OCI-LY7 (cell line): ENCODE measurements at regions of chr3 and their contacts with region 1.

Region 1: DNA sequence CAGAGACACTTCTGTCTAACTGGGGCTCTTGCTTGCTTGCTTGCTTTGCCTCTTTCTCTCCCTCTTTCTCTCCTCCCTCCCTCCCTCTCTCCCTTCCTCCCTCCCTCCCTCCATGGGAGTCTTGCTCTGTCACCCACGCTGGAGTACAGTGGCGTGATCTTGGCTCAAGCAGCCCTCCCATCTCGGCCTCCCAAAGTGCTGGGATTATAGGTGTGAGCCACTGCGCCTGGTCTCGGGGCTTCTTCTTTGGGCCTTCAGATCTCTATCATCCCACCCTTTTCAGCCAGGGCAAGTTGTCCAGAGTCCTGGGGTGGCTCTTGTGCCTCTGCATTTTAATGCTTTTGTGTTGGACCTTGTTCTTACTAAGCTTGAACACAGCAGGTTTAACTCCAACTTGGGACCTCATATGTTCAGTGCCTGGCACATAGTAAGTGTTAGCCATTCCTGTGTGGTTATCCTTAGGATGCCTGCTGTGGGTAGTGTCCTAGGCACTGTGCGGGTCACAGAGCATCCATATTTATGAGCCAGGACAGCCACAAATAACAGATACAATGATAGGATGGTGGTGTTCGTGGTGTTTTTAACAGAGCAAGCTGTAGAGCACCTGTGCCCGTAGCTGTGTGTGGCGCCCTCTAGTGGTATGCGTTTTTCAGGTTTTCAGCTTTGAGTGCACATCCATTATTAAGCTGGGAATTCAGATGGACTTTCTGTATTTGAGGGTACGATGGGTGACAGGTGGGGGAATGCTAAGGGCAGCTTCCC is 75.1 kb downstream of the CCK start:
- DNase-seq: peak; percentile 84
- H3K4me3 ChIP-seq: no peak overlapping the region
- H3K27ac ChIP-seq: peak overlapping the region; percentile 92
- H3K4me1 ChIP-seq: peaks cover 63% of the 10 kb centered on the region
- CTCF ChIP-seq: peak; percentile 99

Region 2: GRCh38 chr3:42118762-42119361 is 72.0 kb before region 1 on chr3:
- CTCF ChIA-PET with region 1: interaction called, 36 read pairs
- POLR2A ChIA-PET with region 1: interaction called, 24 read pairs
- intact Hi-C with region 1: loop called (anchors 1 kb)
- DNase-seq: peak; percentile 83
- H3K4me3 ChIP-seq: no peak overlapping the region
- H3K27ac ChIP-seq: peak overlapping the region; percentile 22
- H3K4me1 ChIP-seq: peaks cover 58% of the 10 kb centered on the region
- CTCF ChIP-seq: peak; percentile 89

Region 3: DNA sequence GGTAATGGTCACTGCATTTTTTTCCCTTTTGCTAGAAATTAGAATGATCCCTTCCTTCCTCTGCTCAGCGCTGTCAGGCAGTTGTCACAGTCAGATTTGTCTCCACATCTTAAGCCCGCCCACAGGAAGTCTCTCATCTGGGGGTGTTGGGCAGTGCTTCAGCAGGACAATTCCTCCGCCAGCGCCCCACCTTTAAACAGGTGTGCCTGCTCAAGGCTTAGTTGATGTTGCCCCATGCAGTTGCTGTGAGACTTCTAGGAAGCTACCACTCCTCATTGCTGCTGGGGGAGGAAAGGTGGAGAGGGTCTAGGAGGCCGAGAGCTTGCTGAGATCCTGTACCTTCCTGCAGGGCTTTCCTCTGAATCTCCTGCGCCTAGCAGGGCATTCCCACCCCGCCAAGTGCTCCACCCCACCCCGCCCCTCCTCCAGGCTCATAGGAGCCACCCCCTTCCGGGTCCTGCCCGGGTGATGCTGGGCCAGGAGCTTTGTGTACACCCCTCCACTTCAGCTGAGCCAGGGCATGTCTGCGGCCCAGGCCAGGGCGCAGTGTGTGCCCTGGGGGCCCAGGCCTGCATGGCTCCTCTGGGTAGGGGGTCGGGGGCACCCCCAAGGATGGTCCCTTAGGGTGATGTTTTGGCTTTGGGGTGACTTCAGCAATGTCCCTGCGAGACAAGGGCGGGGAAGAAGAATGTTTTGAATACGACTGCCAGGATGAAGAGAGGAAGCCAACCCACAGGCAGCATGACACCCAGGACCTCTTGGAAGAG is 31.0 kb before region 1 on chr3:
- CTCF ChIA-PET with region 1: interaction called, 14 read pairs
- POLR2A ChIA-PET with region 1: interaction called, 6 read pairs
- intact Hi-C with region 1: no loop called
- DNase-seq: peak; percentile 88
- H3K4me3 ChIP-seq: peak overlapping the region; percentile 67
- H3K27ac ChIP-seq: peak overlapping the region; percentile 66
- H3K4me1 ChIP-seq: peaks cover 70% of the 10 kb centered on the region
- CTCF ChIP-seq: no peak

Region 4: DNA sequence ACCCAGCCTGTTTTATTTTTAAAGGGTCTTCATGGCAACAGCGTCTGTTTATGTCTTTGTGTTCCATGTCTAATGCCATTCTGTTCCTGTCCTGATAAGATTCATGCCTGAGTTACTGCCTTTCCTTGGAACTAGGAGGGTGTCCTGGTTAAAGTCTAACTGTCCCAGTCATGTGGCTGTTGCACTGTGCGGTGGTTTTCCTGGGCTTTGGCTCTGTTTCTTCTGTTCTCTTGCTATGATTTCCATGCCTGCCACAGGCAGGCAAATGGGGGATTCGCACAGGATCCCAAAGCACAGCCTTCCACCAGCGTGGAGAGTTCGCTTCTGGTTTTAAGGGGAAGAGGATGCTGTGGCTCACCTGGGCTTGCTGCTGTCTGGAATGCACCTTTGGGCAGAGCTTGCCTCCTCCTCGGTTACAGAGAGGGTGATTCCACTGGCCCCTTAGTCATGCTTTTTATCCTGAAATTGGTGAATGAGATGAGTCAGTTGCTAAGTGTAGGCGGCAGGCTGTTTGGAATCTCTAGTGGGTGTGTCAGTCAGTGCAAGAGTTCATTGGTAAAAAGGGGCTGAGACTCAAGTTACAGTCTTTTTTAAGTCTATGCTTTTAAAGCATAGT is 11.7 kb before region 1 on chr3:
- CTCF ChIA-PET with region 1: interaction called, 9 read pairs
- POLR2A ChIA-PET with region 1: interaction called, 14 read pairs
- intact Hi-C with region 1: loop called (anchors 1 kb)
- DNase-seq: no peak
- H3K4me3 ChIP-seq: no peak overlapping the region
- H3K27ac ChIP-seq: peak overlapping the region; percentile 10
- H3K4me1 ChIP-seq: peaks cover 68% of the 10 kb centered on the region
- CTCF ChIP-seq: no peak

Region 5: GRCh38 chr3:42229942-42230688 is 39.2 kb after region 1 on chr3:
- CTCF ChIA-PET with region 1: no interaction called
- POLR2A ChIA-PET with region 1: no interaction called
- intact Hi-C with region 1: loop called (anchors 1 kb)
- DNase-seq: peak; percentile 40
- H3K4me3 ChIP-seq: no peak overlapping the region
- H3K27ac ChIP-seq: no peak overlapping the region
- H3K4me1 ChIP-seq: peaks cover 3% of the 10 kb centered on the region
- CTCF ChIP-seq: peak; percentile 71

Region 6: DNA sequence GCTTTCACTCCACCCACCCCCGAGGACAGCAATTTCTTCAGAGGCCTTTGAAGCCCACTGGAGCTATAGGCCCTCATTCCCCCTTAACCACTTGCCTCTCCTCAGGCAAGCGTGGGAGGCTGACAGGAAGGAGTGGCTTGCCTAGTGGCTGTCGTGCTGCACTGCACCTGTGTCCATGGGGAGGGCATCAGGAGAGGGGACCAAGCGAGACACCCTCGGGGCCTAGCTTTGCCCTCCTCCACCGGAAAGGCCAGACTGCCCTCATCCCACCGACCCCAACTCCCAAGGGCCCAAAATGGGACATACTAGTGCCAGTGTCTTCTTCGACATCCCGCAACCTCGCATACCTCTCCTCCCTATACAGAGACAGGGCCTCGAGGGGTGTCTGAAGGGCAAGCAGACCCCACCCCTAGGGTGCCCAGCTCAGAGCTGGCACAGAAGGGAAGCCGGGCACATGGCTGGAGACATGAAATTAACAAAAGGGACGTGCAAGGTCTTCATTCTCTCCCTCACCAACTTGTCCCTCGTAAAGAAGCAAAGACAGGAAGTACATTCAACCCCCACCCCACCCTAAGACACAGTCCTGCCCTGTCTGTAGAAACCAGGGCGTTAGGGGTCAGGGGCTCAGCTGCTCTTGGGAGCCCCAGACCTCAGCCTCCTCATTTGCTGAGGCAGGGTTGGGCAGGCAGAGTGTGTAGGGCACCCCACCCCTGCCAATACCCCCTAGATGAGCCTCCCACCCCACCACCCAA is 335.9 kb after region 1 on chr3:
- CTCF ChIA-PET with region 1: no interaction called
- POLR2A ChIA-PET with region 1: no interaction called
- intact Hi-C with region 1: no loop called
- DNase-seq: no peak
- H3K4me3 ChIP-seq: no peak overlapping the region
- H3K27ac ChIP-seq: no peak overlapping the region
- H3K4me1 ChIP-seq: no peaks in the 10 kb centered on the region
- CTCF ChIP-seq: no peak

Region 7: DNA sequence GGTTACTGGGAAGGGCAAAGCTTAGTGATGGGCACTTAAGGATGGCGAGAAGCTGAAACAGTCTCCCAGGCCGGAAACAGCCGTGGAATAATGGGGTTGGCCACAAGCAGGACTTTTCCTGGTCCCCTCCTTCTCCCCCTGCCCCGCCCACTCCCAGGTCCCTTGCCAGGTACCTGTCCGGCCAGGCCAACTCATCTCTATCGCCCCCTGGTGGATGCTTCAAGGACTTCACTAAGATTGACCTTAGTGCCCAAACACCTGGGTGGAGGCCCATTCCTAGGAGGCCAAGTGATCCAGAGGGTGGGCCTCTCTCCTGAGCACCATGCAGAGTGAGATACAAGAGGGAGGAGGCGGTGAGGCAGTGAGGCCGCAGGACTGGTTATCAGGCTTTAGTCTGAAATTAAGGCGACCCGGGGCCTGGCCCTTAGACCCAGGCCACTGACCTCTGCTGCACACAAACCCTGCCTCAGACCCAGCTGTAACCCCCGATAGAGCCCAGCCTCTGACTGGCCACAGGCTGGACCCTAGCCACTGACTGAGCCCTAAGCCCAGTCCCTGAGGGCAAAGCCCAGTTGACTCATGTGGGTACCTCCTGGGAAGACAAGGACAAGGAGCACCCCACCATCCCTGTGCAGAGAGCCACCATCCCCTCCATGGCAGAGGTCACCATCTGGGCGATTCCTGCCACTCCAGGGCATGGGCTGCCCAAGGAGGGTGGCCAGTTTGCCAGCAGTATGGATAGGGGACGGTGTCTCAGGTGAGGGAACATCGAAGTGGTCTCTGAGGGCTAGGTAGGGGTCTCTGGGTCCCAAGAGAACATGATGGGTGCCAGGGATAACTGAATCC is 349.2 kb after region 1 on chr3:
- CTCF ChIA-PET with region 1: no interaction called
- POLR2A ChIA-PET with region 1: no interaction called
- intact Hi-C with region 1: no loop called
- DNase-seq: peak; percentile 65
- H3K4me3 ChIP-seq: no peak overlapping the region
- H3K27ac ChIP-seq: no peak overlapping the region
- H3K4me1 ChIP-seq: no peaks in the 10 kb centered on the region
- CTCF ChIP-seq: peak; percentile 86